Activated CD8-positive, alpha-beta T cell treated with anti-CD3 and anti-CD28 coated beads, Interleukin-2, amount 10 ng/mL, durations not matched to agents 7 days and 5 days (primary cell): ENCODE measurements at regions of chr1 and their contacts with region 1.

Region 1: GRCh38 chr1:214439352-214440119 is 111.9 kb downstream of the PTPN14 start:
- DNase-seq: peak; percentile 47
- ATAC-seq: peak; percentile 68
- H3K4me3 Mint-ChIP-seq: peak overlapping the region; percentile 59
- H3K27ac Mint-ChIP-seq: peak overlapping the region; percentile 79
- H3K4me1 Mint-ChIP-seq: peaks cover 47% of the 10 kb centered on the region
- H3K27me3 Mint-ChIP-seq: peaks cover 9% of the 10 kb centered on the region

Region 2: DNA sequence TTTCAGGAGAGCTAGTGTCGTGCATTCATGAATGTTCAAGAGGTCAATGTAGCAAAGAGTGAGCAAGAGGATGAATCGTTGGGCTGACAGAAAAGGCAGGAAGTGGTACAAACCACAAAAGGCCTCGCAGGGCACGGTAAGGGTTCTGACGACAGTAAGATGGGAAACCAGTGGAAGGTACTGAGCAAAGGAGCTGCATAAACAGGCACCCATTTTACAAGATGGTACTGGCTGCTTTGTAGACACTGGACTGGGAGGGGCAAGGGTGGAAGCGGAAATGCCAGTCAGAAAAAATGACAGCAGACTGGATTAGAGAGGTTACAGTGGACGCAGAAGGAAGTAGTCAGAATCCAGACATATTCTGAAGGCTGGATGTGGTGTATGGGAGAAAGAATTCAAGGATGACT is 11.7 kb before region 1 on chr1:
- CTCF ChIA-PET with region 1: interaction called, 5 read pairs
- POLR2A ChIA-PET with region 1: interaction called, 15 read pairs
- DNase-seq: peak; percentile 90
- ATAC-seq: peak; percentile 99
- H3K4me3 Mint-ChIP-seq: peak overlapping the region; percentile 56
- H3K27ac Mint-ChIP-seq: peak overlapping the region; percentile 96
- H3K4me1 Mint-ChIP-seq: peaks cover 33% of the 10 kb centered on the region
- H3K27me3 Mint-ChIP-seq: peaks cover under 1% of the 10 kb centered on the region